Common myeloid progenitor, CD34-positive (primary cell): ENCODE measurements at regions of chrX and their contacts with region 1.

Region 1: GRCh38 chrX:133892336-133892735 is 93.1 kb downstream of the GPC3 start:
- DNase-seq: no peak
- H3K4me3 ChIP-seq: no peak overlapping the region
- H3K27ac ChIP-seq: no peak overlapping the region
- H3K4me1 ChIP-seq: no peaks in the 10 kb centered on the region
- H3K27me3 ChIP-seq: no peaks in the 10 kb centered on the region

Region 2: DNA sequence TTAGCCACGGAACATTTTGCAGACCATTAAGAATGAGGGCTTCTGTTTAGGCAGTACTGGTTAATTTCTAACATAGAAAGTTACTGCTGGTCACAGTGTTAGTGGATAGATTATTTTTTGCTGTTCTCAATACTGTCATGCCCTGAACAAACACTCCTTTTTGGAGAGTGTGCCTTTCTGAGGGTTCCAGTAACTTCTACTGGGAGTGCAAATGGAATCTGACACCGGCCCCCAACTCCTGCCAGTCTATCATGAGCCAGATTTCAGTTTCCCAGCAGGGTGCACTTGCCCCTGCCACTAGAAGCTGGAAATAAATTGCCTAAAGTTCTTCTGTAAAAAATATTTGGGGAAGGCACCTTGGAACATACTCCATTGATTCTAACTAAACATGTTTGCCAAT is 252.6 kb before region 1 on chrX:
- CTCF ChIA-PET with region 1: no interaction called
- POLR2A ChIA-PET with region 1: interaction called, 10 read pairs
- DNase-seq: no peak
- H3K4me3 ChIP-seq: no peak overlapping the region
- H3K27ac ChIP-seq: no peak overlapping the region
- H3K4me1 ChIP-seq: no peaks in the 10 kb centered on the region
- H3K27me3 ChIP-seq: peaks cover 0 to 5% (median 0%) of the 10 kb centered on the region in 5 experiments

Region 3: GRCh38 chrX:133880032-133880443 is 12.3 kb before region 1 on chrX:
- CTCF ChIA-PET with region 1: no interaction called
- POLR2A ChIA-PET with region 1: no interaction called
- DNase-seq: no peak
- H3K4me3 ChIP-seq: no peak overlapping the region
- H3K27ac ChIP-seq: no peak overlapping the region
- H3K4me1 ChIP-seq: no peaks in the 10 kb centered on the region
- H3K27me3 ChIP-seq: peaks cover 0 to 2% (median 0%) of the 10 kb centered on the region in 5 experiments